Activated CD4-positive, alpha-beta T cell treated with anti-CD3 and anti-CD28 coated beads, Interleukin-2, amount 10 ng/mL, durations not matched to agents 24 days and 14 days (primary cell): ENCODE measurements at regions of chr3 and their contacts with region 1.

Region 1: GRCh38 chr3:45760878-45761711 is 35.2 kb downstream of the SLC6A20 start:
- DNase-seq: peak; percentile 76
- H3K4me3 Mint-ChIP-seq: no peak overlapping the region
- H3K27ac Mint-ChIP-seq: no peak overlapping the region
- H3K4me1 Mint-ChIP-seq: peaks cover 2% of the 10 kb centered on the region
- H3K27me3 Mint-ChIP-seq: peaks cover 5% of the 10 kb centered on the region

Region 2: GRCh38 chr3:45618081-45618509 is 143.0 kb before region 1 on chr3:
- intact Hi-C with region 1: no loop called
- DNase-seq: no peak
- H3K4me3 Mint-ChIP-seq: no peak overlapping the region
- H3K27ac Mint-ChIP-seq: no peak overlapping the region
- H3K4me1 Mint-ChIP-seq: peaks cover 8% of the 10 kb centered on the region
- H3K27me3 Mint-ChIP-seq: no peaks in the 10 kb centered on the region

Region 3: DNA sequence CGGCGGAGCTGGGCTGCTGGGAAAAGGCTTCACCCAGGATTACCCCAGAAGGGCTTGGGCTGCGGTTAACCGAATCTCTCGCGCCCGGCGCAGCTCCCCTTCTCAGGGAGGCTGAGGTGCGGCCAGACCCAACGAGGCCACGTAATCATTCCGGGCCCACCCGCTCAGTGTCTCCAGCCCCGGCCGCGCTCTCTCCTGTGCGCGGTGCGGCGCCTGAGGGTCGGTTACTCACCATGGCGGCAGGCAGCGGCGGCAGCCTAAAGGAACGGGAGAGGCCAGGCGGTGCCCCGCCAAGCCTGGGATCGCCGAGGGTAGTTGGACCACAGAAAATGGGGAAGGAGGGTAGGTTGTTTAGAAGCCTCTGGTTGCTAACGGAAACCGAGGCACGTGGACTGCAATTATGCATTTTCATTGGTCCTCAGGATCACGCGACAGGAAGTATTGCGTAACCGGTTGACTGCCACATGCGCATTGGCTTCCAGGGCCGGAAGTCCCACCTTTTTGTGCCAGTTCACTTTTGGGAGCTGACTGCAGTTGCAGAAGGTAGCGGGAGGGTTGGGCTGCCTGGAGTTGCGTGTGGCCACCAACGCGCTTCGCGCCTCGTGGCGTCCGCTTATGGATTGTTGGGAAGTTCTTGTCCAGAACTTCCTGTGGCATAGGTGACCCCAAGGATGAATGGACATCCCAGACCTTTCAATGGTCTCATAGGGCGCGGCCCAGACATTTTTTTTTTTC is 80.8 kb after region 1 on chr3 and contains the start of gene LZTFL1:
- intact Hi-C with region 1: loop called (anchors 5 kb)
- DNase-seq: peak; percentile 96
- H3K4me3 Mint-ChIP-seq: peak within 1 kb of the TSS; percentile 94
- H3K27ac Mint-ChIP-seq: peak within 1 kb of the TSS; percentile 86
- H3K4me1 Mint-ChIP-seq: peaks cover 19% of the 10 kb centered on the region
- H3K27me3 Mint-ChIP-seq: peaks cover 52% of the 10 kb centered on the region
- total RNA-seq, gene LZTFL1: 3.1 and 4.3 TPM in 2 replicates

Region 4: GRCh38 chr3:45929042-45929679 is 168.1 kb after region 1 on chr3:
- intact Hi-C with region 1: loop called (anchors 1 kb)
- DNase-seq: peak; percentile 90
- H3K4me3 Mint-ChIP-seq: no peak overlapping the region
- H3K27ac Mint-ChIP-seq: peak overlapping the region; percentile 43
- H3K4me1 Mint-ChIP-seq: peaks cover 5% of the 10 kb centered on the region
- H3K27me3 Mint-ChIP-seq: no peaks in the 10 kb centered on the region

Region 5: DNA sequence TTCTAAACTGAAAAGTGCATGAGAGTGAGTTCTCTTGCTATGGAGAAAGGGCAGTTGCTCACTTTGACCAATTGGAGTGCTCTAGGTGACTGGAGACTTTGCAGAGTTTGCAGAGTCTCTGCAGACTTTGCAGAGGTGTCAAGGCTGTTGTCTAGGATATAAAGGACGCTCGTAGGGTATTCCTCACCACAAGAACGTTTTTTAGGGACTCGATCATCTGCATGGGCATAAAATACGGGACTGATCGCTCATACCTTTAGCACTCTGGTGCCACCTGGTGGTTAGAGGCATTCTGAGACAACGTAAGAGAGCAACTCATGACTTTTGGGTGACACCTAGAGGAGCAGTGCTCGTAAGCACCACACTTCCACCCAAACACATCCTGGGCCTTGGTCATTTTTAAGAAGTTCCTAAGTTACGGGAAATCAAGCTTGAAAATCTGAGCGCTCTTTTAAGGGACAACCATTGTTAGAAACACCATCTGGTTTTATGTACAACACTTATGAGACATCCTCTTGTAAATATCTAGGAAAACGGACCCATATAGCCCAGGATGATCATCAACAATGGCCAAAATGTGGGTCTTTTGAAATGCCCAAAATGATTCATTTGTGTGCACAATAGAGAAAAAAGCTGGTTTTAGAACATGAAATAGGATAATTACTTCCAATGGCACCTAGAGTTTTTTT is 317.8 kb after region 1 on chr3:
- intact Hi-C with region 1: loop called (anchors 1 kb)
- DNase-seq: peak; percentile 97
- H3K4me3 Mint-ChIP-seq: peak overlapping the region; percentile 51
- H3K27ac Mint-ChIP-seq: no peak overlapping the region
- H3K4me1 Mint-ChIP-seq: peaks cover 35% of the 10 kb centered on the region
- H3K27me3 Mint-ChIP-seq: peaks cover 18% of the 10 kb centered on the region

Region 6: DNA sequence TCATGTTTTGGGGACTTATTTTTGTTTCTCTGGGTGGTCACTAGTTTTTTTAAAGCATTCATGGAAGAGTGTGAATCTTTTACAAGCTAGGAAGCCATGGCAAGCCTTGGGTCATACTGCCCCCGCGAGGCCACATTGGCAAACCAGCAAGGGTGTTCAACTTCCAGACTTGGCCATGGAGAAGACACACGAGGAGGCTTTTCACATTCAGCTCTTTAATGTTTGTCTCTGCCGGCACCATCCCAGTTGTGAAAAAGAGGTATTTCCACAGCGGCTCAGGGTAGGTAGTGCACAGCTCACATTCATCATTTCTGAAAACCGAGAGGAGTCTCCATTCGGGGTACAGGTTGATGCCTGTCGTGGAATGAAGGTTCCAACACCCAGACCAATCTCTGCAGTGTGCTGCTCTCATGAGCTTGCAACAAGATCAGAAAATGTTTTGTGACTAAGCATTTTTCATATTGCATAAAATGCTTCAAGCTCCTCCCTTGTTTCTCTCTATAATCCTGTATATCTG is 617.4 kb after region 1 on chr3:
- intact Hi-C with region 1: loop called (anchors 10 kb)
- DNase-seq: peak; percentile 90
- H3K4me3 Mint-ChIP-seq: no peak overlapping the region
- H3K27ac Mint-ChIP-seq: peak overlapping the region; percentile 57
- H3K4me1 Mint-ChIP-seq: peaks cover 42% of the 10 kb centered on the region
- H3K27me3 Mint-ChIP-seq: peaks cover 23% of the 10 kb centered on the region